Endothelial cell of umbilical vein (primary cell): ENCODE measurements at regions of chr13 and their contacts with region 1.

Region 1: DNA sequence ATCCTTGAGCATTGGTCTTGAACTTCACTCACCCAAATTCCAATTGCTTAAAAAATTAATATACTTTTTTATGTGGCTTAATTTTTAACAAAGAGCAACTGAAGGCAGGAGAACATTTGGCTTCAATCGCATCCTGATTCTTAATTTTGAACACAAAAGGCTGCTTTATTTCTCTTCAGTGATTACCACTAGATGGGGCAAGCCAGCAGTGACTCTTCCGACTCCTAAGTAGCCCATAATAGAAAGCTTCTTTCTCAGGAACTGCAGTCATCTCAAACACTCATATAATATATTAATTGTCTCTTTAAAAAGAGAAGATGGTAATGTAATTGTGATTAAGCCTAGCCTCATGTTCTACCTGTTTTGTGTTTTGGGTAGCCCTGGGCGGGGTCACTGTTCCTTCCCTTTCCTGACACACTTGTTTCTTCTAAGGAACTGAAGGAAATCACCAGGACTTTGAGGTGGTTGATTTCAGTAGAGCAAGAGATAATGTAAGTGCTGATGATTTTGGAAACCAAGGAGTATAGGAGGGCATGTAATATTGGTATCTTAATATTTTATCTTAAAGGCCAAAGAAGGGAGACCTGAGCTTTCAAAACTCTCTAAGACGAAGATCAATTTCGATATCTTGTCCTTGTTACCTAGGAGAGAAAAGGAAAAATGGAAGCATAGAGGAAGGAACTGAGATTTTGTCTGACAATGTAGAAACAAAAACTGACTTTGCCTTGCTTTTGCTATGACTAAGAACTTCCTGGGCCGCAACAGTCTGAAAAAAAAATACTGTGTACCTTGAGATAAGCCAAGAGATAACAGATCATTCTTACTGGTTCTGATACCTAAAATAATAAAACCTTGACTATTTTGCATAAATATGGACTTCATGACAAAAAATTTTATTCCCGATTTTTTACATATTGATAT is 73.1 kb downstream of the TNFSF13B start:
- DNase-seq: peak; percentile 6
- H3K4me3 ChIP-seq: no peak overlapping the region
- H3K27ac ChIP-seq: no peak overlapping the region
- H3K4me1 ChIP-seq: no peaks in the 10 kb centered on the region
- H3K27me3 ChIP-seq: no peaks in the 10 kb centered on the region
- CTCF ChIP-seq: peak; percentile 14 to 31
- POLR2A ChIP-seq: no peak

Region 2: DNA sequence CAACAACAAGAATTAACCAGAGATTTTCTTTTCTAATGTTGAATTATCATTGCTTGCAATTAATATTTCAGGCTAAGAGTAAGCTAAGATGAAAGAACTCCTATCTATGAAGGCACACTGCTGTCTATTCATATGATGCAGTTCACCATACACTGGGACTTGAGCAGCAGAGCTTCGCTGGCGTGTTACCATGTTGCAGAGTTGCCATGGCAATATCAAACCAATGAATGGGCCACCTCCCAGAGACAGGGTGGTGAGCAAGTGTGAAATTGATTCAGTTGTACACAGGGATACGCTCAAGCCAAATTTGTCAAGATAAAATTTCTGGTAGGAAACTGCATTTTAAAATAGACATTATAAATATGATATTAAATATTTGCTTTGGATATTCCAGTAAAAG is 217.5 kb after region 1 on chr13:
- CTCF ChIA-PET with region 1: no interaction called
- POLR2A ChIA-PET with region 1: interaction called, 12 read pairs
- dilution Hi-C with region 1: no loop called
- intact Hi-C with region 1: no loop called
- DNase-seq: no peak
- H3K4me3 ChIP-seq: no peak overlapping the region
- H3K27ac ChIP-seq: no peak overlapping the region
- H3K4me1 ChIP-seq: no peaks in the 10 kb centered on the region
- H3K27me3 ChIP-seq: no peaks in the 10 kb centered on the region
- CTCF ChIP-seq: no peak
- POLR2A ChIP-seq: no peak